Panc1 (cell line): ENCODE measurements at regions of chr7 and their contacts with region 1.

Region 1: GRCh38 chr7:129224251-129225205 is at the start of gene AHCYL2:
- DNase-seq: peak; percentile 97
- ATAC-seq: peak; percentile 97
- H3K4me3 ChIP-seq: peak within 1 kb of the TSS; percentile 75 to 95
- H3K27ac ChIP-seq: peak within 1 kb of the TSS; percentile 96
- H3K4me1 ChIP-seq: peaks cover 16% of the 10 kb centered on the region
- H3K27me3 ChIP-seq: no peaks in the 10 kb centered on the region
- CTCF ChIP-seq: no peak
- total RNA-seq, gene AHCYL2: 20.2 TPM

Region 2: GRCh38 chr7:129258649-129259389 is 34.3 kb after region 1 on chr7:
- CTCF ChIA-PET with region 1: no interaction called
- POLR2A ChIA-PET with region 1: interaction called, 12 read pairs
- in situ Hi-C with region 1: no loop called
- intact Hi-C with region 1: no loop called
- DNase-seq: no peak
- ATAC-seq: no peak
- H3K4me3 ChIP-seq: no peak overlapping the region
- H3K27ac ChIP-seq: no peak overlapping the region
- H3K4me1 ChIP-seq: no peaks in the 10 kb centered on the region
- H3K27me3 ChIP-seq: no peaks in the 10 kb centered on the region
- CTCF ChIP-seq: no peak

Region 3: GRCh38 chr7:129292861-129293260 is 68.3 kb after region 1 on chr7:
- CTCF ChIA-PET with region 1: no interaction called
- POLR2A ChIA-PET with region 1: no interaction called
- in situ Hi-C with region 1: no loop called
- intact Hi-C with region 1: no loop called
- DNase-seq: no peak
- ATAC-seq: no peak
- H3K4me3 ChIP-seq: no peak overlapping the region
- H3K27ac ChIP-seq: no peak overlapping the region
- H3K4me1 ChIP-seq: no peaks in the 10 kb centered on the region; the same call in 1 of the 2 replicates
- H3K27me3 ChIP-seq: no peaks in the 10 kb centered on the region
- CTCF ChIP-seq: no peak

Region 4: GRCh38 chr7:129611246-129612111 is 387.0 kb after region 1 on chr7 and contains the start of gene NRF1:
- CTCF ChIA-PET with region 1: no interaction called
- POLR2A ChIA-PET with region 1: no interaction called
- in situ Hi-C with region 1: no loop called
- intact Hi-C with region 1: loop called (anchors 10 kb)
- DNase-seq: peak; percentile 43
- ATAC-seq: peak; percentile 98
- H3K4me3 ChIP-seq: peak within 1 kb of the TSS; percentile 90 to 98
- H3K27ac ChIP-seq: peak within 1 kb of the TSS; percentile 94
- H3K4me1 ChIP-seq: peaks cover 17% of the 10 kb centered on the region
- H3K27me3 ChIP-seq: no peaks in the 10 kb centered on the region
- CTCF ChIP-seq: peak; percentile 24; the same call in 1 of the 2 replicates
- total RNA-seq, gene NRF1: 14.0 TPM